Endothelial cell of umbilical vein (primary cell): ENCODE measurements at regions of chr16 and their contacts with region 1.

Region 1: DNA sequence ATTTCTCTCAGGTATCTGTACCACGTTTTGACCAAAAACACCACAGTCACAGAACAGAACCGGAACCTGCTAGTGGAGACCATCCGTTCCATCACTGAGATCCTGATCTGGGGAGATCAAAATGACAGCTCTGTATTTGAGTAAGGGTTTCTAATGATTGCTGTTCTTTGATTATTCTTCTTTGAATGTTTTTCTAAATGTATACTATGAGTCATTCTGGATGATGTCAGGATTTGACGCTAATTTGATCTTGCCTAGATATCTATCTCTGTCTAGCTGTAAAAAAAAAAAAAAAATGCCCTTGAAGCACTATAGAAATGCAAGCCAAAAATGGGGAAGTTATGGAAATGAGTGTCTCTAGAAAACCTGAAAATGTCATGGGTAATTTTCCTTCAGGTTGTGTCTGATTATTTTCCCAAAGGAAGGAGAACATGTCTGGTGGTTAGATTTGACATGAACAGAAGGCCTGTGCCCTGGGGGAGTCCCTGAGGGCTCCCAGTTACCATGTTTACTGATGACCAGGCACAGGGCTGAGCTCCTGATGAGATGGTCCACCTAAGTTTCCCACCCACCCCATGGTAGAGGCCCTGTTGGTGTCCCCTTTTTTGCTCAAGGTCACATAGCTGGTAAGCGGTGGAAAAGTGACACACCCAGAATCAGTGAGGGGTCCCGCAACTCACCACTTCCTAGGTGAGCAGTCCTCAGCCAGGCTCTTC is 13.6 kb downstream of the CLEC16A start:
- DNase-seq: peak; percentile 66
- H3K4me3 ChIP-seq: no peak overlapping the region
- H3K27ac ChIP-seq: peak overlapping the region; percentile 40
- H3K4me1 ChIP-seq: peaks cover 37% of the 10 kb centered on the region
- H3K27me3 ChIP-seq: no peaks in the 10 kb centered on the region
- CTCF ChIP-seq: no peak
- POLR2A ChIP-seq: no peak

Region 2: GRCh38 chr16:11175787-11176341 is 217.9 kb after region 1 on chr16:
- CTCF ChIA-PET with region 1: no interaction called
- POLR2A ChIA-PET with region 1: no interaction called
- dilution Hi-C with region 1: no loop called
- intact Hi-C with region 1: no loop called
- DNase-seq: no peak
- H3K4me3 ChIP-seq: no peak overlapping the region
- H3K27ac ChIP-seq: no peak overlapping the region
- H3K4me1 ChIP-seq: no peaks in the 10 kb centered on the region
- H3K27me3 ChIP-seq: no peaks in the 10 kb centered on the region
- CTCF ChIP-seq: no peak
- POLR2A ChIP-seq: no peak

Region 3: GRCh38 chr16:11356573-11357331 is 398.8 kb after region 1 on chr16:
- CTCF ChIA-PET with region 1: interaction called, 70 read pairs
- POLR2A ChIA-PET with region 1: no interaction called
- dilution Hi-C with region 1: no loop called
- intact Hi-C with region 1: loop called (anchors 1 kb)
- DNase-seq: peak; percentile 51
- H3K4me3 ChIP-seq: no peak overlapping the region
- H3K27ac ChIP-seq: no peak overlapping the region
- H3K4me1 ChIP-seq: peaks cover 9% of the 10 kb centered on the region
- H3K27me3 ChIP-seq: peaks cover 0 to 4% of the 10 kb centered on the region in 2 experiments
- CTCF ChIP-seq: peak; percentile 65 to 83
- POLR2A ChIP-seq: no peak